Activated CD4-positive, alpha-beta memory T cell treated with anti-CD3 and anti-CD28 coated beads for 36 hours (primary cell): ENCODE measurements at regions of chr13 and their contacts with region 1.

Region 1: DNA sequence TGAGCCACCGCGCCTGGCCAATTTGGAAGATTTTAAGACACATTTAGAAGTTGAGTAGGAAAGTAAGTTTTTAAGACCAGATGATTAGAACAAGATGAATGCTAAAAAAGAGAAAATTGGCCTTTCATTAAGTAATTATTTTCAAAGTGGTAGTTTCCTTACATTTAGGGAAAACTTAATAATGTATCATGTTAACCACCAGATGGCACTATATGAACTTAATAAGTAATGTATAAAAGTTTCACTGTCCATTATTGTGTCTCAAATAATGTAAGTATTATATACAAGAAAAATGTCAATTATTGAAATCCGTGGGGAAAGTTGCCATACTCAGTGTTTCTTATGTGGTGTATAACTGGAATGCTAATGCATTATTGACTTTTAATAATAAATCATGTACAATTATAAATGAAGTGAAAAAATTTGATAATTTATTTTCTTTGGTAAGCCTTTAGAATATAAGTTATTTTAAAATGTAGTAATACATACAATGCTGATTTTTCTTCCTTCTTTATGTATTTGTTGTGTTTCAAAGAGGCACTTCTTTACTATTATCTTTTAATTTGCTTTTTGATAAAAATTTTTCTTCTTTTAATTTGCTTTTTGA is 29.2 kb downstream of the COG6 start:
- DNase-seq: no peak
- H3K4me3 Mint-ChIP-seq: no peak overlapping the region
- H3K27ac Mint-ChIP-seq: no peak overlapping the region
- H3K4me1 Mint-ChIP-seq: peaks cover 20% of the 10 kb centered on the region
- H3K27me3 Mint-ChIP-seq: no peaks in the 10 kb centered on the region

Region 2: DNA sequence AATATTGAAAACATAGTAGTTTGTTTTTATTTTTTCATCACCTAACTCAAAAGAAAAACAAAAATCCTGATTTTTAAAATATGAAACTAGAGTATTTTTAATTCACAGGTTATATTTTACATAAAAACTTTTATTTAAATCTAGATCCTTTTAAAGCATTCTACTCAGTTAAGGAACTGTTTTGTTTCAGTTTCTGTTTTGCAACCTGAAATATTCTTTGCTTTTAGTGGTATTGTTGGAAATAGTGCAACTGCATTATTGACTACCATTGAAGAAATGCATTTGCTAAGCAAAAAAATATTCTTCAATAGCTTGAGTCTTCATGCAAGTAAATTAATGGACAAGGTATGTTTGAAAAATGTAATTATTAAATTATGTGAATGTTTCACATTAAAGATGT is 14.6 kb after region 1 on chr13:
- CTCF ChIA-PET with region 1: interaction called, 3 read pairs
- POLR2A ChIA-PET with region 1: no interaction called
- intact Hi-C with region 1: loop called (anchors 2 kb)
- DNase-seq: no peak
- H3K4me3 Mint-ChIP-seq: no peak overlapping the region
- H3K27ac Mint-ChIP-seq: no peak overlapping the region
- H3K4me1 Mint-ChIP-seq: peaks cover 9% of the 10 kb centered on the region
- H3K27me3 Mint-ChIP-seq: no peaks in the 10 kb centered on the region

Region 3: DNA sequence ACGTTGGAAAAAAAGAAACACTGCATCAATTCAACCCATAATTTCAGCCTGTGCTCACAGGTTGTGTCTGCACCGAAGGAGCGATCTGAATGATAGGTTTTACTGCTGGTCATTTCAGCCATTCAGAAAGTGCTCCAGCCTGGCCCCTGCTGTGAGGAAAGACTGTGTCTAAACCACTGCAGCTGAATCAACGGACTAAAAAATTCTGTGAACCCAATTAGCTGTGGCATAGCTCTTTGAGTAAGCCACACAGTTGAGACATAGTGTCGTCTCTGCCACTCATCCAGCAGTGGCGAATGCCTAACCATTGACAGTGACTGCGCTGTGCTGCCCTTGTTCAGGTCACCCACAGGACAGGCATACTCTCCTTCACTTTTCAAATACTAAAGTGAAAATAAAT is 150.6 kb after region 1 on chr13:
- CTCF ChIA-PET with region 1: no interaction called
- POLR2A ChIA-PET with region 1: no interaction called
- intact Hi-C with region 1: no loop called
- DNase-seq: no peak
- H3K4me3 Mint-ChIP-seq: no peak overlapping the region
- H3K27ac Mint-ChIP-seq: no peak overlapping the region
- H3K4me1 Mint-ChIP-seq: peaks cover 3% of the 10 kb centered on the region
- H3K27me3 Mint-ChIP-seq: peaks cover 3% of the 10 kb centered on the region